Endothelial cell of umbilical vein (primary cell): ENCODE measurements at regions of chr3 and their contacts with region 1.

Region 1: GRCh38 chr3:193489949-193490348 is 64.7 kb downstream of the ATP13A4 start:
- DNase-seq: no peak
- H3K4me3 ChIP-seq: no peak overlapping the region
- H3K27ac ChIP-seq: no peak overlapping the region
- H3K4me1 ChIP-seq: no peaks in the 10 kb centered on the region
- H3K27me3 ChIP-seq: peaks cover 0 to 1% of the 10 kb centered on the region in 2 experiments
- CTCF ChIP-seq: no peak
- POLR2A ChIP-seq: no peak

Region 2: GRCh38 chr3:192675958-192676649 is 813.8 kb before region 1 on chr3:
- CTCF ChIA-PET with region 1: no interaction called
- POLR2A ChIA-PET with region 1: no interaction called
- dilution Hi-C with region 1: no loop called
- intact Hi-C with region 1: loop called (anchors 5 kb)
- DNase-seq: no peak
- H3K4me3 ChIP-seq: no peak overlapping the region
- H3K27ac ChIP-seq: no peak overlapping the region
- H3K4me1 ChIP-seq: no peaks in the 10 kb centered on the region
- H3K27me3 ChIP-seq: no peaks in the 10 kb centered on the region
- CTCF ChIP-seq: no peak
- POLR2A ChIP-seq: no peak

Region 3: DNA sequence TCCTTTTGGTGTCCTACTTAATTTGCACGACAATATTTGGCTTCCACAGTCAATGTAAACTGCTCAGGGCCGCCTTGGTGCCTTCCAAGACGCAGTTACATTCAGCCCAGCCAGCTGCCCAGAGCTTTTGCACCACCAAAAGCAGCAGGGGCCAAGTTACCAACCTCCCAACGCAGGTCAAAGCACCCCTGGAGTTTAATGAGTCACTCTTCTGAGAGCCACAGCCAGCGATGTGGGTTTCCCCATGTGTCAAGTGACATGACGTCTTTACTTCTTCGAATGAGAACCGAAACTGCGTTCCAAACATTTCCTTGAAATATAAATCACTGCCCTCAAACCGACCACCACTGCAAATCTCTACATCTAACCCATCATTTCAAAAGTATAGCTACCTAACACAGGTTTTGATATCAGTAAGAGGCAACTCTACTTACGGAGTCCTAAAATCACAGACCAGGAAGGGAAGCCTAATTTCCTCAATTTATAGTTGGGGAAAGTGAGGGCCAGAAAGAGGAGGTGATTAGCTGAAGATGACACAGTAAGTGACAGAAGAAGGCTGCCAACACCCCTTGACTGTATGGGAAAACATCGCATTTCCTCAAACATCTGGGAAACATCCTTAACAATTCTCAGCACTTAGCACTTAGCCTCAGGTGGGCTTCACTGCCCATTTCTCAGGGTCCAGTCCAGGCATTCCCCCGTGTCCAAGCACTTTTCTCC is 596.8 kb before region 1 on chr3:
- CTCF ChIA-PET with region 1: no interaction called
- POLR2A ChIA-PET with region 1: no interaction called
- dilution Hi-C with region 1: no loop called
- intact Hi-C with region 1: no loop called
- DNase-seq: peak; percentile 44
- H3K4me3 ChIP-seq: no peak overlapping the region
- H3K27ac ChIP-seq: no peak overlapping the region
- H3K4me1 ChIP-seq: peaks cover 27% of the 10 kb centered on the region
- H3K27me3 ChIP-seq: no peaks in the 10 kb centered on the region
- CTCF ChIP-seq: no peak
- POLR2A ChIP-seq: no peak

Region 4: DNA sequence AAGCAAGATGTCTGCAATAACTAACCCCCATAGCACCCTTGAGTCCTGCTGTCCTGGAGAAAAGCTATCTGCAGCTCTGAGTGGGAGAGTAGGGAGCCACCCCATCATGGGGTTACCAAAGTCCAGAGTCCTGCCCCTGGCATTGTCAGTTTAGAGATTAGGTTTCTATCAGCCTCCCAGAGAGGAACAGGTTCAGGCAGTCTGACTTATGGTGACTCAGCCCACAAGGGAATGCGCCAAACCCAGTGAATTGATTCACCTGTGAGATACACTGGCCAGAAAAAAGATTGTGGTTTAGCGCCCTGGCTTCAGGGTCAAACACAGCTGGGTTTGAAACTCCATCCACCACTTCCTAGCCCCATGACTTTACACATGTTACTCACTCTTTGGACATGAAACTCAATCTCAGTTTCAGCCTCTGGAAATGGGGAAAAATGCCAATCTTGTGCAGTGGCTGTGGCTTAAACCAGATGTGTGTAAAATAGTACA is 382.4 kb after region 1 on chr3:
- CTCF ChIA-PET with region 1: no interaction called
- POLR2A ChIA-PET with region 1: no interaction called
- dilution Hi-C with region 1: no loop called
- intact Hi-C with region 1: no loop called
- DNase-seq: peak; percentile 72
- H3K4me3 ChIP-seq: no peak overlapping the region
- H3K27ac ChIP-seq: peak overlapping the region; percentile 6
- H3K4me1 ChIP-seq: peaks cover 33% of the 10 kb centered on the region
- H3K27me3 ChIP-seq: no peaks in the 10 kb centered on the region
- CTCF ChIP-seq: no peak
- POLR2A ChIP-seq: peak; percentile 30